ENCODE measurements at regions of chr2 and their contacts with region 1.

Region 1: GRCh38 chr2:218269899-218270720 is at the starts of genes AAMP and PNKD:
- DNase-seq: peak; percentile 100
- ATAC-seq: peak; percentile 83
- H3K4me3 Mint-ChIP-seq: peak within 1 kb of the TSS; percentile 93
- H3K27ac Mint-ChIP-seq: peak within 1 kb of the TSS; percentile 88
- H3K4me1 Mint-ChIP-seq: peaks cover 67% of the 10 kb centered on the region
- H3K27me3 Mint-ChIP-seq: no peaks in the 10 kb centered on the region
- CTCF ChIP-seq: no peak
- total RNA-seq, gene AAMP: 63.4 and 63.6 TPM in 2 replicates
- total RNA-seq, gene PNKD: 21.0 and 23.7 TPM in 2 replicates

Region 2: GRCh38 chr2:218257390-218257981 is 12.6 kb before region 1 on chr2:
- CTCF ChIA-PET with region 1: interaction called, 29 read pairs
- POLR2A ChIA-PET with region 1: interaction called, 14 read pairs
- intact Hi-C with region 1: loop called (anchors 1 kb)
- DNase-seq: peak; percentile 67
- ATAC-seq: peak; percentile 89
- H3K4me3 Mint-ChIP-seq: peak overlapping the region; percentile 73
- H3K27ac Mint-ChIP-seq: peak overlapping the region; percentile 92
- H3K4me1 Mint-ChIP-seq: peaks cover 70% of the 10 kb centered on the region
- H3K27me3 Mint-ChIP-seq: no peaks in the 10 kb centered on the region
- CTCF ChIP-seq: no peak

Region 3: GRCh38 chr2:218292048-218293014 is 22.2 kb after region 1 on chr2 and contains the start of gene TMBIM1:
- CTCF ChIA-PET with region 1: interaction called, 138 read pairs
- POLR2A ChIA-PET with region 1: interaction called, 97 read pairs
- intact Hi-C with region 1: loop called (anchors 1 kb)
- DNase-seq: peak; percentile 89
- ATAC-seq: peak; percentile 80
- H3K4me3 Mint-ChIP-seq: peak within 1 kb of the TSS; percentile 83
- H3K27ac Mint-ChIP-seq: peak within 1 kb of the TSS; percentile 92
- H3K4me1 Mint-ChIP-seq: peaks cover 73% of the 10 kb centered on the region
- H3K27me3 Mint-ChIP-seq: no peaks in the 10 kb centered on the region
- CTCF ChIP-seq: peak; percentile 40
- total RNA-seq, gene TMBIM1: 40.7 and 45.0 TPM in 2 replicates

Region 4: DNA sequence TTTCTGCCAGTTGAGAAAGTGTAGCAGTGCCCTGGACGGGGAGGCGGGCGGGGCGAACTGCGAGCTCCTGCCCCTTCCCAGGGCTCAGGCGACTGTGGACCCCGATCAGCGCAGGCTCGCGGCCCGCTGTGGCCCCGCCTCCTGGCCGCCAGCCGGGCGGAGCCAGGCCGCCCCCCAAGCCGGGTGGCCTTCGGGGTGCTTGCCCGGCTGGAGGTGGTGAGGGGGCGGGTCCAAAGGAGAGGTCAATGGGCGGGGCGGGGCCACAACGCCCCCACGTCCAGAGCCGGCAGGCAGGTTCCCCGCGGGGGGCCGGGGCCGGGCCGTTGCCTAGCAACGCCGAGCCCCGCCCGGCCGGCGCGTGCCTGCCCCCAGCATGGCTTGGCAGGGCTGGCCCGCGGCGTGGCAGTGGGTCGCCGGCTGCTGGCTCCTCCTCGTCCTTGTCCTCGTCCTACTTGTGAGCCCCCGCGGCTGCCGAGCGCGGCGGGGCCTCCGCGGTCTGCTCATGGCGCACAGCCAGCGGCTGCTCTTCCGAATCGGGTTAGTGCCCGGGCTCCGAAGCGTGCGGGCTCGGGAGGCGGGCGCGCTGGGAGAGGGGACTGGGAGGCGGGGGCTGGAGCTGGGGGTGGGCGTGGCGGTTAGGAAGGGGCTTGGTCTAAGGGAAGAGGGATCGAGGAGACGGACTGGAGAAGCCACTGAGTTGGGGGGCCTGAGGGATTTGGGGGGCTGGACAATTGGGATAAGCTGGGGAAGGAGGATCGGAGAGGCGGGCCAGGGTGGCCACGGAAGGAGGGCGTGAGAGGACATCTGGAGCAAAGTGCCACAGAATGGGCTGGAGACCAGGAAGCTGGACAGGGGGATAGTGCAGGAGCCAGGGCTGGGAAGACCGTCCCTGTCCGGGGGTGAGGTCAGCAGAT is 53.0 kb after region 1 on chr2:
- CTCF ChIA-PET with region 1: no interaction called
- POLR2A ChIA-PET with region 1: interaction called, 8 read pairs
- intact Hi-C with region 1: loop called (anchors 2 kb)
- DNase-seq: peak; percentile 65
- ATAC-seq: peak; percentile 74
- H3K4me3 Mint-ChIP-seq: peak overlapping the region; percentile 81
- H3K27ac Mint-ChIP-seq: peak overlapping the region; percentile 61
- H3K4me1 Mint-ChIP-seq: peaks cover 42% of the 10 kb centered on the region
- H3K27me3 Mint-ChIP-seq: peaks cover 7% of the 10 kb centered on the region
- CTCF ChIP-seq: no peak

Region 5: DNA sequence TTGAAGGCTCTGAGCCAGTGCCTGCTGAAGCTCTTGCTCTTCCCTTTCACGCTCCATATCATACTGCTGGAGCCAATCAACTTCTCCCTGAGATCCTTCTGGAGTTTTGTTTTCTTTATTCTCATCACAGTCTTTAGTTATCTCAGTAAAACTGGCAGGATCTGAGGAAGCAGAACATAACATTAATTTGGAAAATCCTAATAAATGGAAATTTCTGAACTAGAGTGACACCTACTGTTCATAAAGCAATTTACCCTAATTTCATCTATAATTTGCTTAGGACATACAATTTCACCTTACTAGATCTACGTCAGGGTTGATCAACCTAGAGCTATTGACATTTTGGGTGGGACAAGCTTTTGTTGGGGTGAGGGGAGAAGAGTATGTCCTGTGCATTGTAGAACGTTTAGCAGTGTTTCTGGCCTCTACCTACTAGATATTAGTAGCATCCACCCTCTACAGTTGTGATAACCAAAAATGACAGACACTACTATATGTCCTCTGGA is 196.0 kb after region 1 on chr2:
- CTCF ChIA-PET with region 1: no interaction called
- POLR2A ChIA-PET with region 1: interaction called, 3 read pairs
- intact Hi-C with region 1: loop called (anchors 1 kb)
- DNase-seq: no peak
- ATAC-seq: no peak
- H3K4me3 Mint-ChIP-seq: no peak overlapping the region
- H3K27ac Mint-ChIP-seq: peak overlapping the region; percentile 8
- H3K4me1 Mint-ChIP-seq: peaks cover 17% of the 10 kb centered on the region
- H3K27me3 Mint-ChIP-seq: no peaks in the 10 kb centered on the region
- CTCF ChIP-seq: no peak

Region 6: GRCh38 chr2:218659258-218659987 is 389.3 kb after region 1 on chr2 and contains the starts of genes BCS1L and ZNF142:
- CTCF ChIA-PET with region 1: no interaction called
- POLR2A ChIA-PET with region 1: no interaction called
- intact Hi-C with region 1: loop called (anchors 1 kb)
- DNase-seq: peak; percentile 85
- ATAC-seq: peak; percentile 96
- H3K4me3 Mint-ChIP-seq: peak within 1 kb of the TSS; percentile 99
- H3K27ac Mint-ChIP-seq: peak within 1 kb of the TSS; percentile 93
- H3K4me1 Mint-ChIP-seq: peaks cover 31% of the 10 kb centered on the region
- H3K27me3 Mint-ChIP-seq: no peaks in the 10 kb centered on the region
- CTCF ChIP-seq: no peak
- total RNA-seq, gene BCS1L: 66.9 and 75.1 TPM in 2 replicates
- total RNA-seq, gene ZNF142: 44.9 and 63.6 TPM in 2 replicates